ENCODE measurements at regions of chr20 and their contacts with region 1.

Region 1: GRCh38 chr20:44111712-44112335 is 75.2 kb downstream of the JPH2 start:
- DNase-seq: peak in 1 of 2 experiments; percentile 47
- H3K4me3 ChIP-seq: no peak overlapping the region
- H3K4me3 Mint-ChIP-seq: no peak overlapping the region
- H3K27ac Mint-ChIP-seq: no peak overlapping the region
- H3K4me1 ChIP-seq: no peaks in the 10 kb centered on the region
- H3K4me1 Mint-ChIP-seq: no peaks in the 10 kb centered on the region
- H3K27me3 ChIP-seq: no peaks in the 10 kb centered on the region
- H3K27me3 Mint-ChIP-seq: peaks cover 2% of the 10 kb centered on the region
- CTCF ChIP-seq: no peak

Region 2: DNA sequence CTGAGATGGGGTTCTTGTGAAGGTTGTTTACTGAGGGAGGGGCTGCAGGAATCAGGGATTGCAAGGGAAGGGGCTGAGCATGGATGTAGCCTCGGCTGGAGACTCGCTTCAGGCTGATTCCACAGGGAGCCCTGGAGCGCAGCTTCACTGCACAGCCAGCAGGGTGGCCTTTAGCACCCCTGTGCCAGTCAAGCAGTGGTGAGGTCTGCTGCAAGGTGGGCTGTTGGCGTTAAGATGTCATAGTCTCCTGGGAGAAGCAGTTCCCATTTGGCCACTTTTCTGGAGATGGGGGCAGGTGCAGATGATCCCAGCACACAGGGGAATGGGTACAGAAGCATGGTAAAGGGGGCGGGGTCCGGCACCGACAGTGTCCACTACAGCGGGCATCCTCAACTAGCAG is 70.8 kb before region 1 on chr20:
- CTCF ChIA-PET with region 1: no interaction called
- POLR2A ChIA-PET with region 1: no interaction called
- intact Hi-C with region 1: no loop called
- DNase-seq: peak in 1 of 2 experiments; percentile 39
- H3K4me3 ChIP-seq: no peak overlapping the region
- H3K4me3 Mint-ChIP-seq: no peak overlapping the region
- H3K27ac Mint-ChIP-seq: no peak overlapping the region
- H3K4me1 ChIP-seq: no peaks in the 10 kb centered on the region
- H3K4me1 Mint-ChIP-seq: no peaks in the 10 kb centered on the region
- H3K27me3 ChIP-seq: peaks cover 5% of the 10 kb centered on the region
- H3K27me3 Mint-ChIP-seq: peaks cover 53% of the 10 kb centered on the region
- CTCF ChIP-seq: peak in 1 of 2 experiments; percentile 10

Region 3: GRCh38 chr20:44069203-44070011 is 42.4 kb before region 1 on chr20:
- CTCF ChIA-PET with region 1: no interaction called
- POLR2A ChIA-PET with region 1: no interaction called
- intact Hi-C with region 1: no loop called
- DNase-seq: peak in 1 of 2 experiments; percentile 41
- H3K4me3 ChIP-seq: no peak overlapping the region
- H3K4me3 Mint-ChIP-seq: peak overlapping the region; percentile 4
- H3K27ac Mint-ChIP-seq: no peak overlapping the region
- H3K4me1 ChIP-seq: no peaks in the 10 kb centered on the region
- H3K4me1 Mint-ChIP-seq: no peaks in the 10 kb centered on the region
- H3K27me3 ChIP-seq: peaks cover 6% of the 10 kb centered on the region
- H3K27me3 Mint-ChIP-seq: peaks cover 38% of the 10 kb centered on the region
- CTCF ChIP-seq: no peak

Region 4: DNA sequence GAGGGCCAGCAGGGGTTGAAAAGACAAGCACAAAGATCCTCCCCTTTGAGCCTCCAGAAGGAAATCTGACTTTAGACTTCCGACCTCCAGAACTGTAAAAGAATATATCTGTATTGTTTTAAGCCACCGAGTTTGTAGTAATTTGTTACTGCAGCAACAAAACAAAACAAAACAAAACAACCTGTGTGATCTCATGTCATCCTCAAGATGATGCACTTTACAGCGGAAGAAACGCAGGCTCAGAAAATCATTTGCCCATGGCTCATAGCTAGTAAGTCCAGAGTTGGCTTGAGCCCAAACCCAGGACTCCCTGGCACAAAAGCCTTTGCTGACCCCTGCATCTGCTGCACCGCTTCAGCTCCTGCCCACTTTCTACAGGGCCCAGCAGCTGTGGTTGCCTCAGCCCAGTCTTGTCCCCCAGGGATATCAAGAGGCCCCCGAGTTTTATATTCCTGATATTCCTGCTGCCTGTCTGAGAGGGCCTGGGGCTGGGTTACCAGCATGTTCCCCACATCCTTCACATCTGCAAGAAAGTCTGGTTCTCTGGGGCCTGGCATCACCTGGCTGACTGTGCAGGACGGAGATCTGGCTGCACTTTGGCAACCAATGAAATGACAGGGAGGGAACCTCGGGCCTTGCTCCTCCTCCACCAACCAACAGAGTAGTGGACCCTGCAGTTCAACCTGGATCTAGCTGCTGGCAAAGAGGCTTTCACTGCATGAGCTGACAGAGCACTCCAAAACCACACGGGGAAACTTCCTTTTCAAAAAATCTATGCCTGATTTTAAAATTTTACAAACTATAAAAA is 18.3 kb after region 1 on chr20:
- CTCF ChIA-PET with region 1: interaction called, 14 read pairs
- POLR2A ChIA-PET with region 1: no interaction called
- intact Hi-C with region 1: no loop called
- DNase-seq: peak in 1 of 2 experiments; percentile 42
- H3K4me3 ChIP-seq: no peak overlapping the region
- H3K4me3 Mint-ChIP-seq: no peak overlapping the region
- H3K27ac Mint-ChIP-seq: peak overlapping the region; percentile 3
- H3K4me1 ChIP-seq: peaks cover 19% of the 10 kb centered on the region
- H3K4me1 Mint-ChIP-seq: peaks cover 8% of the 10 kb centered on the region
- H3K27me3 ChIP-seq: no peaks in the 10 kb centered on the region
- H3K27me3 Mint-ChIP-seq: no peaks in the 10 kb centered on the region
- CTCF ChIP-seq: no peak

Region 5: GRCh38 chr20:44137210-44137801 is 25.5 kb after region 1 on chr20:
- CTCF ChIA-PET with region 1: interaction called, 28 read pairs
- POLR2A ChIA-PET with region 1: interaction called, 5 read pairs
- intact Hi-C with region 1: loop called (anchors 2 kb)
- DNase-seq: peak; percentile 92 to 98
- H3K4me3 ChIP-seq: no peak overlapping the region
- H3K4me3 Mint-ChIP-seq: peak overlapping the region; percentile 55
- H3K27ac Mint-ChIP-seq: peak overlapping the region; percentile 82
- H3K4me1 ChIP-seq: peaks cover 47% of the 10 kb centered on the region
- H3K4me1 Mint-ChIP-seq: peaks cover 39% of the 10 kb centered on the region
- H3K27me3 ChIP-seq: no peaks in the 10 kb centered on the region
- H3K27me3 Mint-ChIP-seq: no peaks in the 10 kb centered on the region
- CTCF ChIP-seq: peak in 1 of 2 experiments; percentile 13

Region 6: DNA sequence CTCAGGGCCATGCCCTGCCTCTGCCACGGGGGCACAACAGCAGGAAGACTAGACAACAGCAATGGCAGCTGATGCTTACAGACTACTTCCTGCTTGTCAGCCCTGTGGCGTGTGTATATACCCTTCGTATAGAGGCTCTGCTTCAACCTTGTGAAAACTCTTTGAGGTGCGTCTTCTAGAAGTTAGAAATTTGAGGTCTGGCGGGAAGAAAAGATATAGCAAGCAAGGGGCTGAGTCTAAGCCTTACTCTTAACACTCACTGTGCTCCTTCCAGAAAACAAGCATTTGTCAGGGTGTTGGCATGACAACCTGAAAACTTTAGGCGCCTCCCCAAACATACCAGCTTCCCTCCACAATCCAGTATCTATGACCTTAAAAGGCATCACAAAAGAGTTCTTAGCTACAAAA is 41.8 kb after region 1 on chr20:
- CTCF ChIA-PET with region 1: interaction called, 14 read pairs
- POLR2A ChIA-PET with region 1: no interaction called
- intact Hi-C with region 1: no loop called
- DNase-seq: no peak
- H3K4me3 ChIP-seq: no peak overlapping the region
- H3K4me3 Mint-ChIP-seq: no peak overlapping the region
- H3K27ac Mint-ChIP-seq: peak overlapping the region; percentile 3
- H3K4me1 ChIP-seq: peaks cover 33% of the 10 kb centered on the region
- H3K4me1 Mint-ChIP-seq: peaks cover 16% of the 10 kb centered on the region
- H3K27me3 ChIP-seq: no peaks in the 10 kb centered on the region
- H3K27me3 Mint-ChIP-seq: no peaks in the 10 kb centered on the region
- CTCF ChIP-seq: no peak

Region 7: GRCh38 chr20:44180814-44181213 is 69.0 kb after region 1 on chr20:
- CTCF ChIA-PET with region 1: interaction called, 25 read pairs
- POLR2A ChIA-PET with region 1: no interaction called
- intact Hi-C with region 1: no loop called
- DNase-seq: peak; percentile 85 to 96
- H3K4me3 ChIP-seq: no peak overlapping the region
- H3K4me3 Mint-ChIP-seq: peak overlapping the region; percentile 2
- H3K27ac Mint-ChIP-seq: peak overlapping the region; percentile 2
- H3K4me1 ChIP-seq: peaks cover 49% of the 10 kb centered on the region
- H3K4me1 Mint-ChIP-seq: peaks cover 27% of the 10 kb centered on the region
- H3K27me3 ChIP-seq: no peaks in the 10 kb centered on the region
- H3K27me3 Mint-ChIP-seq: no peaks in the 10 kb centered on the region
- CTCF ChIP-seq: no peak

Region 8: DNA sequence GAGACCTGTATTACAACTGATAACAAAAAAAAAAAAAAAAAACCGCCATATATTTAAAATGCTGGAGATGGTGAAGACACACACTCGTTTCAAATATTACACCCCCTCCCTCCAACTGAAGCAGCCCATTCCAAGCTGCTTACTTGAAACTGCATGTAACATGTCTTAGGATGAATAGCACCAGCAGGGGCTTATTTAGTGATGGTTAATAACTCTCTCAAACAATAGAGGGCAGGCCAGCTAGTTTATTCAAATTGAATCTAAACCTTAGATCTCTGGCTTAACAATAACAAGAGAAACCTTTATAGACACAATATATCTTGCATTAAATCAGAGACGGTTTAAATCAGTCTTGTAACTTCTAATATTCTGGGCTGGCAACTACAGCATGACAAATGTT is 84.4 kb after region 1 on chr20:
- CTCF ChIA-PET with region 1: interaction called, 439 read pairs
- POLR2A ChIA-PET with region 1: interaction called, 5 read pairs
- intact Hi-C with region 1: no loop called
- DNase-seq: peak in 1 of 2 experiments; percentile 14
- H3K4me3 ChIP-seq: no peak overlapping the region
- H3K4me3 Mint-ChIP-seq: no peak overlapping the region
- H3K27ac Mint-ChIP-seq: no peak overlapping the region
- H3K4me1 ChIP-seq: no peaks in the 10 kb centered on the region
- H3K4me1 Mint-ChIP-seq: no peaks in the 10 kb centered on the region
- H3K27me3 ChIP-seq: no peaks in the 10 kb centered on the region
- H3K27me3 Mint-ChIP-seq: no peaks in the 10 kb centered on the region
- CTCF ChIP-seq: peak; percentile 42

Region 9: DNA sequence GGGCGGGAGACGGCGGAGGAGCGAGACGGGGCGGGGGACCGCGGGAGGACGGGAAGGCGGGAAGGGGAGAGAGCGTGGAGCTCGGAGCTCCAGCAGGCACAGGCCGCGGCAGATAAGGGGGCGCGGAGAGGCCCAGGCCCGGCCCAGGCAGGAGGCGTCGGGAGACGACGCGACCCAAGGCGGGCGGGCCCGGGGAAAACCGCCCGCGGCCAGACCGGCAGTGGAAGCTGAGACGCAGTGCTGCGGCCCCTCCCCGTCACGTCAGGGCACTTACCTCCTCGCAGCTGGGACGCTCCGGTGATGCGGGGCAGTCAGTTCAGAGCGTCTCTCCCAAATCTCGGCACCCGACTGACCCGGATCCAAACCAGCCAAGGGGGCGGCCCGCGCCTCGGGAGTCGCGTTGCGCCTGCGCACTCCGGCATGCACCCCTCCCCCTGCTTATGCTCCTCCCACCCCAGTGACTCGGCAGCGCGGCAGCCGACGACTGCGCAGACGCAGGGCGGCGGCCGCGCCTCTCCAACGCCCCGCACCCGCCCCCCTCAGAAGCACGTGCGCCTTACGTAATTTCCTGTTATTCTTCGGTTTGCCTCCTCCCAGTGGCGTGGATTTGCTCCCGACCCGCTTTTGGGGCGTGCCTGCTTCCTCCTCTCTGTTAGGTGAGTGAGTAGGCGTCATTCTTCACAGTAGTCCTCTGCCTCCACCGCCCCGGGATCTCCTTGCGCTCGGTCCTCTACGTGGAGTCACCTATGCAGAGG is 98.8 kb after region 1 on chr20 and contains the start of gene OSER1:
- CTCF ChIA-PET with region 1: interaction called, 15 read pairs
- POLR2A ChIA-PET with region 1: interaction called, 7 read pairs
- intact Hi-C with region 1: no loop called
- DNase-seq: peak; percentile 100
- H3K4me3 ChIP-seq: peak within 1 kb of the TSS; percentile 74
- H3K4me3 Mint-ChIP-seq: peak within 1 kb of the TSS; percentile 95
- H3K27ac Mint-ChIP-seq: peak within 1 kb of the TSS; percentile 96
- H3K4me1 ChIP-seq: peaks cover 19% of the 10 kb centered on the region
- H3K4me1 Mint-ChIP-seq: peaks cover 27% of the 10 kb centered on the region
- H3K27me3 ChIP-seq: no peaks in the 10 kb centered on the region
- H3K27me3 Mint-ChIP-seq: no peaks in the 10 kb centered on the region
- CTCF ChIP-seq: no peak
- total RNA-seq, gene OSER1: 79.7 and 82.3 TPM in 2 replicates

Measured in Caco-2 (cell line).